Heart right ventricle (tissue), 16 donors: ENCODE measurements at regions of chr1 and their contacts with region 1.

Region 1: DNA sequence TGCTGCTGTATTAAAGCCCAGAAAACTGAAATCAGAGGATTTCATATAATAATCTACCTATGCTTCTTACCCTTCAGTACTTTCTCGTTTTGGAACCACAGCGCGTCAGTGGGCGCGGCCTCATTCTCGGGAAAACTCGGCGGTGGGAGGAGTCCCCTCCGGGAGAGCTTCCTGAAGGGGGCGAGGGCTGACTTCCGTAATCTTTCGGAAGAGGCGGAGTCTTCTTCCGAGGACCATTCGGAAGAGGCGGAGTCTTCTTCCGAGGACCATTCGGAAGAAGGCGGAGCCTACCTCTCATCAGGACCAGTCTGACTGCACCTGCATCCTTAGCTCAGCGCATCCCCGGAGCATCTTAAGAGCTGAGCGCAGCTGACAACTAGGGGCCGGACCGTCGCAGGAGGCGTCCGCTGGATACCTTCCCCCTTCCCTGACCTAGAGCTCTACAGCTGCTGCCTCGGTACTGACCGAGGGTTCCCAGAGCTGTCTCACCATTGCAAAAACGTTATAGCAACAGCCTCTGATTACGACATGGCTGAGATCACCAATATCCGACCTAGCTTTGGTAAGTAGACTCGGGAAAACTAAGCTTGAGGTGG is at the start of gene SYT11:
- DNase-seq: peak; percentile 95 to 96
- ATAC-seq: peak; percentile 87 to 93 (median 92)
- H3K4me3 ChIP-seq: peak within 1 kb of the TSS; percentile 11 to 59 (median 52)
- H3K27ac ChIP-seq: peak within 1 kb of the TSS; percentile 81 to 96 (median 94)
- H3K4me1 ChIP-seq: peaks cover 0 to 50% (median 47%) of the 10 kb centered on the region in 9 donors
- H3K27me3 ChIP-seq: no peaks in the 10 kb centered on the region
- CTCF ChIP-seq: peak in 5 of 9 donors; percentile 11 to 38 (median 18)
- total RNA-seq, gene SYT11: 9.2 to 19.4 (median 12.8) TPM

Region 2: GRCh38 chr1:155897746-155898145 is 38.4 kb after region 1 on chr1:
- intact Hi-C with region 1: loop called in 2 of 10 experiments (anchors 5 kb)
- DNase-seq: no peak
- ATAC-seq: no peak
- H3K4me3 ChIP-seq: no peak overlapping the region
- H3K27ac ChIP-seq: no peak overlapping the region
- H3K4me1 ChIP-seq: peaks cover 0 to 23% (median 14%) of the 10 kb centered on the region in 9 donors
- H3K27me3 ChIP-seq: no peaks in the 10 kb centered on the region
- CTCF ChIP-seq: no peak